CD4-positive, alpha-beta memory T cell (primary cell): ENCODE measurements at regions of chr16 and their contacts with region 1.

Region 1: DNA sequence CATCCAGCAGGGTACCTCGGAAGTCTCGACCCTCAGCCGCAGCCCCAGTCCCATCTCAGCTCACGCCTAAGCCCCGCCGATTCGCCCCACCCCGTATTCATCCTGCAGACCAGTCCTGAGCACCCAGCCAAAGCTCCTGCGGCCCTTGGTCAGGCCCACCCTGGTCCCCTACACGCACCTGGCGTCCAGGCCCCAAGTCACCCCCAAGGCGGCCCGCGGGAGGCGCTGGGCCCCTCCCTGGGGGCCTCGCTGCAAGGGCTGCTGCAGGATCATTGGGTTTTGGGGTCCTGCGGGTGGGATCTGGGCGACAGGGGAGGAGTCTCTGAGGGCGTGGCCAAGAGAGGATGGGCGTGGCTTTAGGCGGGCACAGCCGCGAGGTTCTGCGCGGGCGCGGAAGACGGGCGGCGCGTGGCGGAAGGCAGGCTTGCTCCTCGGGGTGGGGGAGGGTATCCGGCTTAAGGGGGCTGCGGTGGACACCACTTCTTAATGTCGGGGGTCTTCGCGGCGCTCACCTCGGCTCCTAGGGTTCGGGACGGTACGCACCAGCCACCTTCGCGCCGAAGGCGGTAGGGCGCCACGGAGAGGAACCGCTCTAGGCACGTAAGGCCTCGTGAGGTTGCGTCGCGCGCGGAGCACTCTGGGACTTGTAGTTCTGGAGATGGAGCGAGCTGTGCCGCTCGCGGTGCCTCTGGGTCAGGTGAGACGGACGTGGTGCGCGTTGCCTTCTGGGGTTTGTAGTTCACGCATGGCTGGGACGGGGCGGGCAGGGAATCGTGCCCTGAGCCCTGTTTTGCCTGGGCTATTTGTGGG is at the starts of genes HCFC1R1 and THOC6:
- DNase-seq: peak; percentile 95 to 97 (median 95)
- H3K4me3 ChIP-seq: peak within 1 kb of the TSS; percentile 38 to 85
- H3K4me3 Mint-ChIP-seq: peak within 1 kb of the TSS; percentile 87 to 97 (median 93)
- H3K27ac ChIP-seq: peak within 1 kb of the TSS; percentile 90
- H3K27ac Mint-ChIP-seq: peak within 1 kb of the TSS; percentile 97 to 99 (median 99)
- H3K4me1 ChIP-seq: peaks cover 56% of the 10 kb centered on the region
- H3K4me1 Mint-ChIP-seq: peaks cover 22 to 67% (median 45%) of the 10 kb centered on the region in 4 donors
- H3K27me3 ChIP-seq: peaks cover 2% of the 10 kb centered on the region
- H3K27me3 Mint-ChIP-seq: no peaks in the 10 kb centered on the region
- total RNA-seq, gene HCFC1R1: 16.0 to 18.0 TPM
- total RNA-seq, gene THOC6: 18.4 to 22.5 TPM

Region 2: GRCh38 chr16:2919511-2920255 is 104.2 kb before region 1 on chr16:
- CTCF ChIA-PET with region 1: no interaction called
- POLR2A ChIA-PET with region 1: no interaction called
- intact Hi-C with region 1: no loop called
- DNase-seq: peak; percentile 47 to 68 (median 62)
- H3K4me3 ChIP-seq: no peak overlapping the region
- H3K4me3 Mint-ChIP-seq: no peak overlapping the region
- H3K27ac ChIP-seq: no peak overlapping the region
- H3K27ac Mint-ChIP-seq: peak overlapping the region; percentile 50 to 90 (median 78)
- H3K4me1 ChIP-seq: no peaks in the 10 kb centered on the region
- H3K4me1 Mint-ChIP-seq: peaks cover 5 to 12% (median 6%) of the 10 kb centered on the region in 4 donors
- H3K27me3 ChIP-seq: no peaks in the 10 kb centered on the region
- H3K27me3 Mint-ChIP-seq: no peaks in the 10 kb centered on the region

Region 3: DNA sequence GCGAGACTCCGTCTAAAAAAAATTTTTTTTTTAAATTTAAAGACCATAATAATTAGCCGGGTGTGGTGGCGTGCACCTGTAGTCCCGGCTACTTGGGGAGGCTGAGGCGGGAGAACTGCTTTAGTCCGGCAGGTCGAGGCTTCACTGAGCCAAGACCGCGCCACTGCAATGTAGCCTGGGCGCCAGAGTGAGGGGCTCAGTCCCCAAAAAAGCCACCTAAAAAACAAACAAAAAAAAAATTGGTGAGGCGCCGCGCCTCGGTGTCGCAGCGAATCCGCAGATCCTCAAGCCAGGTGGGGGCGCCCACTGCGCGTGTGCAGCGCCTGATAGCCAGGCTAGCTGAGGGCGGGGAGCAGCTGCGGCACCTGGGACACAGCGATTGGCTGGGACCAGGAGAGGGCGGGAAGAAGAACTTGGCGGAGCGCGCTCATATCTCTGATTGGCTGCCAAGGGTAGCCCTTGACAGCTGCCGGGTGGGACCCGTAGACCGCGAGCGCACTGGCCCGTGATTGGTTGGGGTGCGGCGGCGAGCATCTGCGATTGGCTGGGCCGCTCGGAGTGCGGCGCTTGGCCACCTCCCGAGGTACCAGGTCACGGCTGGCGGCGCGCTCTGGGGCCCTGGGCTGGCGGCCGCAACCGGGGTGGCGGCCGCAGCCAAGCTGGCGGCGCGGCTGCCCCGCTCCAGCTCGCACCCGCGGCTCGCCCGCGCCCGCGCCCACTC is 20.1 kb before region 1 on chr16:
- CTCF ChIA-PET with region 1: interaction called, 444 read pairs
- POLR2A ChIA-PET with region 1: interaction called, 89 read pairs
- intact Hi-C with region 1: loop called (anchors 1 kb)
- DNase-seq: peak; percentile 94 to 98 (median 97)
- H3K4me3 ChIP-seq: no peak overlapping the region
- H3K4me3 Mint-ChIP-seq: peak overlapping the region; percentile 70 to 84 (median 80)
- H3K27ac ChIP-seq: no peak overlapping the region
- H3K27ac Mint-ChIP-seq: peak overlapping the region in 5 of 7 donors; percentile 32 to 86 (median 65)
- H3K4me1 ChIP-seq: peaks cover 24% of the 10 kb centered on the region
- H3K4me1 Mint-ChIP-seq: peaks cover 13 to 28% (median 21%) of the 10 kb centered on the region in 4 donors
- H3K27me3 ChIP-seq: no peaks in the 10 kb centered on the region
- H3K27me3 Mint-ChIP-seq: peaks cover 2% of the 10 kb centered on the region in 2 donors

Region 4: DNA sequence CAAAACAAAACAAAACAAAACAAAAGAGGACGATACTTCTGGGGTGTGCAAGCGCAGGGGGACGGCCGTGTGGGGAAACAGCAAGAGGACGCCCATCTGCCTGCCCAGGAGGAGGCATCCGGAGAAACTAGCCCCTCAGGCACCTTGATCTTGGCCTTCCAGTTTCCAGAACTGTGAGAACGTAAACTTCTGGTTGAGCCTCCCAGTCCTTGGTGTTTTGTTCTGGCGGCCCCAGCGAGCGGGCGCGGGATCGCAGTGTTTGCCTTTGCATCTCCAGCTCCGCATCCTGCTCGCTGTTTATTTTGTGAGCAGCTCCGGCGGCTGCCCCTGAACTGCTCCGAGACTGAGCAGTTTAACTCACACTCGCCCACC is 21.5 kb after region 1 on chr16:
- CTCF ChIA-PET with region 1: interaction called, 80 read pairs
- POLR2A ChIA-PET with region 1: interaction called, 5 read pairs
- intact Hi-C with region 1: no loop called
- DNase-seq: peak in 2 of 5 donors; percentile 48 to 49
- H3K4me3 ChIP-seq: peak overlapping the region in 1 of 2 donors; percentile 18
- H3K4me3 Mint-ChIP-seq: peak overlapping the region; percentile 72 to 90 (median 83)
- H3K27ac ChIP-seq: no peak overlapping the region
- H3K27ac Mint-ChIP-seq: peak overlapping the region in 2 of 7 donors; percentile 12 to 55
- H3K4me1 ChIP-seq: peaks cover 22% of the 10 kb centered on the region
- H3K4me1 Mint-ChIP-seq: peaks cover 10 to 27% (median 12%) of the 10 kb centered on the region in 4 donors
- H3K27me3 ChIP-seq: peaks cover 33% of the 10 kb centered on the region
- H3K27me3 Mint-ChIP-seq: peaks cover 14 to 18% of the 10 kb centered on the region in 2 donors